Body of pancreas (tissue), 4 donors: ENCODE measurements at regions of chr11 and their contacts with region 1.

Region 1: GRCh38 chr11:66222358-66223149 is 45.9 kb upstream of the RAB1B start:
- DNase-seq: peak; percentile 92 to 94 (median 93)
- ATAC-seq: peak; percentile 96
- H3K4me3 ChIP-seq: no peak overlapping the region
- H3K27ac ChIP-seq: peak overlapping the region in 3 of 4 donors; percentile 17 to 69 (median 18)
- H3K4me1 ChIP-seq: peaks cover 10% of the 10 kb centered on the region
- H3K27me3 ChIP-seq: no peaks in the 10 kb centered on the region
- CTCF ChIP-seq: peak; percentile 96 to 100 (median 100)
- POLR2A ChIP-seq: no peak

Region 2: DNA sequence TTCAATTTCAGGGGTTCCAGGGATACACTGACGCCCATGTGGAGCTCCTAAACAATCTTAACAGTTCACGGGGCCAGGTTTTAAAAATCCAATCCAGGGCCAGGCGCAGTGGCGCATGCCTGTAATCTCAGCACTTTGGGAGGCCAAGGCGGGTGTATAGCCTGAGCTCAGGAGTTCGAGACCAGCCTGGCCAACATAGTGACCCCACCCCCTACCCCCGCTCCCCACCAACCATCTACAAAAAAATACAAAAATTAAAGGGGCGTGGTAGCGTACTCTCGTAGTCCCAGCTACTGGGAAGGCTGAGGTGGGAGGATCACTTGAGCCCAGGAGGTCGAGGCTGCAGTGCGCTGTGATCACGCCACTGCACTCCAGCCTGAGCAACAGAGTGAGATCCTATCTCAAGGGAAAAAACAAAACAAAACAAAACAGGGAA is 261.7 kb before region 1 on chr11:
- intact Hi-C with region 1: no loop called
- DNase-seq: no peak
- ATAC-seq: no peak
- H3K4me3 ChIP-seq: peak overlapping the region; percentile 98 to 99
- H3K27ac ChIP-seq: peak overlapping the region in 3 of 4 donors; percentile 60 to 89 (median 84)
- H3K4me1 ChIP-seq: peaks cover 26% of the 10 kb centered on the region
- H3K27me3 ChIP-seq: no peaks in the 10 kb centered on the region
- CTCF ChIP-seq: no peak
- POLR2A ChIP-seq: no peak

Region 3: DNA sequence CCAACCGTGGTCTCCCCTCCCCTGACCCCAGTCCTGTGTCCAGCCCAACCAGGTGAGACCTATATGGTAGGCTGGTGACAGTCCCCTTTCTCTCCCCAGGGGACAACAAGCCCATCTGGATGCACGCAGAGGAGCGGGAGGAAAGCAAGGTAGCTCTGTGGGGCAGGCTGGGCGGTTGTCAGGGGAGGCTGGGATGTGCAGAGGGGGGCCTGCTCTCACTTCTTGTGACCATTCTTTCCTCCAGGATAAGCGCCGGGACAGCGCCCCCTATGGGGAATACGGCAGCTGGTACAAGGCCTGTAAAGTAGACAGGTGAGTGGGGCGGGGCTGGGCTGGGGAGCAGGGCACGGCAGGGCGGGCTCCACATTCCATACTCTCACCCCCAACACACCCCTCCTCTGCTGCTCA is 42.4 kb after region 1 on chr11:
- intact Hi-C with region 1: loop called (anchors 5 kb)
- DNase-seq: no peak
- ATAC-seq: no peak
- H3K4me3 ChIP-seq: no peak overlapping the region
- H3K27ac ChIP-seq: no peak overlapping the region
- H3K4me1 ChIP-seq: peaks cover 21% of the 10 kb centered on the region
- H3K27me3 ChIP-seq: no peaks in the 10 kb centered on the region
- CTCF ChIP-seq: peak in 3 of 7 experiments; percentile 7 to 11 (median 7)
- POLR2A ChIP-seq: no peak

Region 4: DNA sequence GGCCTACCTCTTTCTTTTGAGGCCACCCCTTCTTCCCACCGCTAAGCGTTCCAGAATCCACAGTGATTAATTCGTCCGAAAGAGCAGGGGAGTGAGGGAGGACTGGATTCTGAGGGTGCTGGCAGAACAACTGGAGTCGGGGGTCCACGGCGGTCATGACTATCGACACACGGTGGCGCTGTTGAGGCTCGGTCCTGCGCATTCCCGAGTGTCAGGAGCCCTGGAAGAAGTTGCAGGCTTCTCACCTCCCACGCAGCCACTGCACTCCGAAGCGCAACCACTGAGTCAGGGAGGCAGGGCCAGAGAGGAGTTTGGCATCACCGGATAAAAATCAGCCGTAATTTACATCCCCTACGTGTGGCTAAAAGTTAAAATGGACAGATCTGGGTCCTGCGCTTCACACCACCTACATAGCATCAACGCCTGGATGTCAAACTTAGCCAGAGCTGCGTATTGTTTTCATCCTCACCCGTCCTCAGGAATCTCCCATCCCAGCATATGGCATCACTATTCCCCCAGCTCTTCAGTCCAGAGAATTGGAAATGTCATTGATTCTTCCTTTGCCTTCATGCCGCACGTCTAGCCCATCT is 356.6 kb after region 1 on chr11:
- intact Hi-C with region 1: no loop called
- DNase-seq: peak; percentile 74 to 84 (median 80)
- ATAC-seq: peak; percentile 85
- H3K4me3 ChIP-seq: no peak overlapping the region
- H3K27ac ChIP-seq: no peak overlapping the region
- H3K4me1 ChIP-seq: peaks cover 5% of the 10 kb centered on the region
- H3K27me3 ChIP-seq: no peaks in the 10 kb centered on the region
- CTCF ChIP-seq: peak; percentile 67 to 88 (median 80)
- POLR2A ChIP-seq: no peak

Region 5: DNA sequence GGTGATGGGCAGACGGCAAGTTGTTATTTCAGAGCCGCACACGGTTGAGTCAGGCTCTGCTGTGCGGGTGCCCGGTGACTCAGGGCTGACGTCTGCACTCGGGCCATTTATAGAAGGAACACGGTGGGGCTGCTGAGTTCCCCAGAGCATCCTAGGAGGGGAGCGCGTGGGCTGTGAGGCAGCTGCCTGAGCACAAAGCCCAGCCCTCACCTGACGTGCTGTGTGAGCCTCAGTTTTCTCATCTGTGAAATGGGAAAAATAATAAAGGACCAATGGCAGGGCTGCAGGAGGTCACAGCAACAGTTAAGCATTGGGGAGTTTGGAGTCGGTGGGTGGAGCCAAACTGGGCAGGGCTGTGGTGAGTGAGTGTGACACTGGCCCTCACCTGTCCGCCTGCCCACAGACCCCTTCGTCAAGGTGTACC is 822.8 kb after region 1 on chr11:
- intact Hi-C with region 1: no loop called
- DNase-seq: no peak
- ATAC-seq: no peak
- H3K4me3 ChIP-seq: no peak overlapping the region
- H3K27ac ChIP-seq: no peak overlapping the region
- H3K4me1 ChIP-seq: no peaks in the 10 kb centered on the region
- H3K27me3 ChIP-seq: no peaks in the 10 kb centered on the region
- CTCF ChIP-seq: no peak
- POLR2A ChIP-seq: no peak